ENCODE measurements at regions of chr9 and their contacts with region 1.

Region 1: DNA sequence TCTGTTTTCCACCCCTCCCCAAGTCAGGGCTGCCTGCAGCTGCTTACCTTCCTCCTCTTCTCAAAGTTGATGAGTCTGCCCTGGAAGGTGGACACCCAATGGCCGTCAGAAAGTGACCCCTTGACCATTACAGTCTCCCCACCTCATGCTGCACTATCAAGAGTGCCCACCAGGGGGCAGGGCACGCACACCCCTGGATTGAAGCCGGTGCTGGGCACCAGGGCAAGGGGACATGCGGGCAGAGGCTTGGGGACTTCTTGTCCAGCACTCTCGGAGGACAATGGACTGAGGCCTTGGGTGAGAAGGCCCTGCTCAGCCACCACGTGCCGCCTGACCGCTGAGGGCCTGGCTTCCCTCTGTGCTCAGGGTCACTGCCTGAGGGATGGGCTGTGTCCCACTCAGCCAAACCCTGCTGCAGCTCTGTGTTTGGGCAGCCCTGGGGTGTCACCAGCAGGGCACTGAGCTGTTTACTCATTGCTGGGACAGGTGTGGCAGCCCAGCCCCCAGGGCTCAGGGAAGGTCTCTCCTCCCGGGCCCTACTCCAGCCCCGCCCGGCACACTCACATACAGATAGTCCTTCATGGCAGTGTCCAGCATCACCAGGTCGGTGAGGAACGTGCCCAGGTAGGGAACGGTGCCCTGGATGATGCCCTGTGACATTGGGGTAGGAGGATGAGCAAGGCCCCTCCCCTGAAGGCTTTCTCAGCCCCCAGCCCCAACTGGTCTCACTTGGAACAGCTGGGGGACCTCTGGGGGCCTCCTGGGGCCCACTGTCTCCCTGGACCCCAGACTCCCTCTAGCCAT is 17.7 kb downstream of the RALGDS start:
- DNase-seq: peak; percentile 63 to 78
- ATAC-seq: peak; percentile 76 to 91
- H3K4me3 ChIP-seq: no peak overlapping the region
- H3K27ac ChIP-seq: peak overlapping the region; percentile 52 to 77 (median 68)
- H3K4me1 ChIP-seq: peaks cover 10 to 16% of the 10 kb centered on the region in 2 donors
- H3K27me3 ChIP-seq: no peaks in the 10 kb centered on the region
- CTCF ChIP-seq: peak; percentile 98 to 100 (median 99)
- POLR2A ChIP-seq: no peak

Region 2: GRCh38 chr9:133048569-133048968 is 54.8 kb before region 1 on chr9:
- in situ Hi-C with region 1: no loop called
- intact Hi-C with region 1: loop called (anchors 5 kb)
- DNase-seq: no peak
- ATAC-seq: no peak
- H3K4me3 ChIP-seq: no peak overlapping the region
- H3K27ac ChIP-seq: no peak overlapping the region
- H3K4me1 ChIP-seq: no peaks in the 10 kb centered on the region
- H3K27me3 ChIP-seq: no peaks in the 10 kb centered on the region
- CTCF ChIP-seq: peak in 3 of 5 experiments; percentile 15 to 35 (median 19)
- POLR2A ChIP-seq: no peak

Region 3: DNA sequence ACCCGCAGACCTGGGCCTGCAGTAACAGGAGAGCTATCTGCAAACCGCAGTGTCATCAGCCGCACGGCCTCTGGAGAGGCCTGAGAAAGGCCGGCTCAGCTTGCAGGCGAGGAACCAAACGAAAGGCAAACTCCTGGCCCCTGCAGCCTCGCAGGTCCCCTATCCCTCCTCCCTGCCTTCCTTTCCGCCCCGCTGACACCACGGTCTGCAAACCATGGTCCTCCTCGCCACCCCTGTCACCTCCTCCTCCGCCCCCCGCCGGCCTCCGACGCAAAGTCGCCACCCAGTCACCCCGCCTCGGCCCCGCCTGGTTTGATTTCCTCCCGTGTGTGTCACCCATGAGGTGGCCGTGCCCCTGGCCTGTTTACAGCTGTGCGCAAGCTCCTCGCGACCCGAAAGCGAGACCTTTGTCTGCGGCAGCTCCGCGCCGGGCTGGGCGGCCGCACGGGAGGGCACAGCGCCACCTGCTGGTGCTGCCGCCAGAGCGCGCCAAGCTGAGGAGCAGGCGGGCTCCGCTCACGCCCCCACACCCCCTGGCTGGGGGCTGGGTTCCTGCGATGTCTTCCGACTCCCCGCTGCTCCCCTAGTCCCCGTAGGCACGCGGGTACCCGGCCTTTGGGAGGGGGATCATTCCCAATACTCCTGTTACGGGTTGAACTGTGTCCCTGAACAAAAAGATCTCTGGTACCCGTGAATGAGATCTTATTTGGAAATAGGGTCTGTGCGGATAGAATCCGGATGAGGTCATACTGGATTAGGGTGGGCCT is 40.9 kb after region 1 on chr9:
- in situ Hi-C with region 1: loop called in 3 of 4 experiments (anchors 5 kb)
- intact Hi-C with region 1: loop called (anchors 1 kb)
- DNase-seq: peak; percentile 87
- ATAC-seq: peak; percentile 52 to 65
- H3K4me3 ChIP-seq: peak overlapping the region; percentile 52 to 55 (median 53)
- H3K27ac ChIP-seq: peak overlapping the region; percentile 79 to 100 (median 90)
- H3K4me1 ChIP-seq: peaks cover 41 to 44% of the 10 kb centered on the region in 2 donors
- H3K27me3 ChIP-seq: no peaks in the 10 kb centered on the region
- CTCF ChIP-seq: peak; percentile 96 to 100 (median 99)
- POLR2A ChIP-seq: peak; percentile 71 to 90

Region 4: GRCh38 chr9:133188006-133188842 is 84.8 kb after region 1 on chr9:
- in situ Hi-C with region 1: no loop called
- intact Hi-C with region 1: no loop called
- DNase-seq: no peak
- ATAC-seq: no peak
- H3K4me3 ChIP-seq: no peak overlapping the region
- H3K27ac ChIP-seq: no peak overlapping the region
- H3K4me1 ChIP-seq: no peaks in the 10 kb centered on the region
- H3K27me3 ChIP-seq: peaks cover 4 to 7% (median 7%) of the 10 kb centered on the region in 3 donors
- CTCF ChIP-seq: no peak
- POLR2A ChIP-seq: no peak